ENCODE measurements at regions of chr19 and their contacts with region 1.

Region 1: DNA sequence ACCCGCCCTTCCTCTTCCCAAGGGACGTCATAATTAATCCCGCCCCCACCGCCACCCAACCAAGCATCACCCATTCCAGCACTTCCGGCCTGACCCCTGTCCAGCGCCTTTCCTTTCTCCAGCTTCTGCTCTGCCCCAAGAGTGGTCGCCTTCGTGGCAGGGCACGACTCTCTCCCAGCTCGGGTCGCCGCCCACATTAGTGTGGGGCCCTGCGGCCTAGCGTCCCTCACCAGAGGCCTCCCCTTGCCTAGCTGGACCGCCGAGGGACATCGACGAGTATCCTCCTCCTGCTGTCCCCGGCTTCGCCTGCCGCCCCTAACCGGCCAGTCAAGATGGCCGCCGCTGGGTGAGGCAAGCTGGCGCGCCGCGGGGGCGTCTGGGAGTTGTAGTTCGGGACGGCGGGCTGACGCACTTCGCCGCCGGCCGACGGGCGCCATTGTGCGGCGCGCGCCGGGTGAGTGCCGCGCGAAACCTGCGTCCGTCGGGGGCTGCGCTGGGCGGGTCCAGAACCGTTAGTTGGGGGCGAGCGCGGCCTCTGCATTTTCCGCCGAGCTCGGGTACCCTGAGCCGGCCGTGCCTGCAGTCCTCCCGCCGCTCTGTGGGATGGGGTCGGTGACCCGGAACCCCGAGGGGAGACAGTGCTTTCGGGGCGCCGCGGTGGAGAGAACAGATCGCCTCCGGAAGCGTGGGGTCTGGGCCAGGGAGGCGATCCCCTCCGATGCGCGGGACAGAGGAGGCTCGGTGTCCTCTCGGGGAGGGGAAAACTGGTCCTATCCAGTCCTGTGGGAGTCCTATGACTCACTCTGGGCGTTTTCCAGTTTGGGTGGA is at the start of gene ZNF274:
- DNase-seq: peak; percentile 97
- ATAC-seq: peak; percentile 98
- total RNA-seq, gene ZNF274: 17.4 TPM

Region 2: DNA sequence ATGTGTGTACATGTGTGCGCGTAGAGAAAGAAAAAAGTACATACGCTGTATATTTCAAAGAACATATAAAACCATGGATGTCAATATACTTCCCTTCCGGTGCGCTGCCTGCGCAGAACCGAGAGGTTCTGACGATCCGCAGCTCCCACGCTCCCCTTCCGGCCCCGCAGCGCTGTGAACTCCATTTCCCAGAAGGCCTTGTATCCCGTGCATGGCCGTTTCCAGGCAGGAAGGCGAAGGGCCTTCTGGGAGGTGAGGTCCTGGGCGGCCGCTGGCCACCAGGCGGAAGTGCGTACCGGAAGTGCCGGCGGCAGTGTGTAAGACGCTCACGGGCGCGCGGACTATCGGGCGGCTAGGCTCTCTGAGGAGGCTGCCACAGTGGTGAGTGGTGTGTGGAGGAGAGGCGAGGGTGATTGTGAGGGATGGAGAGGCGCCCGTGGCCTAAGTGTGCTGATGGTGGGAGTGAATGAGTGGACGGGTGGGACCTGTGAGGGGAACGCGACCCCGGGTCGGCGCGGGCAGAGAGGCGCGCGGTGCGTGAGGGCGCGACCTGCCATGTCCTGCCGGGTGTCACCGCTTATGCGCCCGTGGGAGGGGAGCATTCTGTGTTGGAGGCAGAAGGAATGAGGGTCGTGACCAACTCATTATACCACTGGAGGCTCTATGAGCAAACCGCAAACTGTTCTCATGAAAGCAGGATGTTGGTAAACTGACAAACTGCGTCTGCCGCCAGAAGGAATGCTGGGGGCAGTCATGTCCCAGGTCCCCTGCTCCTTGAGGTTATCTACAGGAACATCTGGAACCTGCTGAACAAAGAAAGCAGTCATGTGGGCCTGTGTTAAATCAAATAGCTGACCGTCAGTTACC is 122.1 kb after region 1 on chr19 and contains the start of gene ERVK3-1:
- intact Hi-C with region 1: loop called (anchors 5 kb)
- DNase-seq: peak; percentile 98
- ATAC-seq: peak; percentile 99
- total RNA-seq, gene ERVK3-1: 20.0 TPM